HEK293 (cell line): ENCODE measurements at regions of chr9 and their contacts with region 1.

Region 1: GRCh38 chr9:134449221-134449894 is 123.1 kb downstream of the RXRA start:
- H3K4me3 ChIP-seq: no peak overlapping the region
- H3K27ac ChIP-seq: no peak overlapping the region
- H3K4me1 ChIP-seq: no peaks in the 10 kb centered on the region
- CTCF ChIP-seq: peak; percentile 87

Region 2: DNA sequence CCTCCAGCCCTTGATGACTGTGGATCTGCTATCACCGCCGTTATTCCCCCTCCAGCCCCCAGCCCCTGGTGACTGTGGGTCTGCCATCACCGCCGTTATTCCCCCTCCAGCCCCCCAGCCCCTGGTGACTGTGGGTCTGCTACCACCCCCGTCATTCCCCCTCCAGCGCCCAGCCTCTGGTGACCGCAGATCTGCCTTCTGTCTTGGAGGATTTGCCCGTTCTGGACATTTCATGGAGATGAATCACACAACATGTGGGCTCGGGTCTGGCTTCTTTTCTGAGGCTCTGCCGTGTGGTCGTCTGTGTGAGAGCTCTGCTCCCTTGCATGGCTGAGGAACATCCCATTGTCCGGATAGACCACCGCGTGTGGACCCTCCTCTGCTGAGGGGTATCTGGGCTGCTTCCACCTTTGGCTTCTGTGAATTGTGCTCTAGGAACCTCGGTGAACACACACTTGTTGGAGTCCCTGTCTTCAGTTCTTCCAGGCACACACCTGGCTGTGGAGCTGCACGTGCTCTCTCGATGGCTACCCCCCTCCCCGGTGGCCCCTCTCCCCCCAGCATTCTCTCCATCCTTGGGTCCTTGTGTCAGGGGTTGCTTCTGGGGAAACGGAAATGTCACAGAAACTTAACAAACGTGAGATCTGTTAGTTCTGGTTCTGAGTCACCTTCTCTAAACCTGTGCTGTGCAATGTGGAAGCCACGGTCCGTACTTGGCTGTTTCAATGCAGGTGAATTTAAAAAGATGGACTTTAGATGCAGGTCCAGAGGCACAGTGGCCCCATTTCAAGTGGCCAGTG is 86.9 kb after region 1 on chr9:
- CTCF ChIA-PET with region 1: interaction called, 13 read pairs
- POLR2A ChIA-PET with region 1: no interaction called
- H3K4me3 ChIP-seq: no peak overlapping the region
- H3K27ac ChIP-seq: no peak overlapping the region
- H3K4me1 ChIP-seq: no peaks in the 10 kb centered on the region
- CTCF ChIP-seq: no peak

Region 3: GRCh38 chr9:134670042-134670525 is 220.7 kb after region 1 on chr9:
- CTCF ChIA-PET with region 1: interaction called, 23 read pairs
- POLR2A ChIA-PET with region 1: no interaction called
- H3K4me3 ChIP-seq: no peak overlapping the region
- H3K27ac ChIP-seq: no peak overlapping the region
- H3K4me1 ChIP-seq: no peaks in the 10 kb centered on the region
- CTCF ChIP-seq: no peak

Region 4: DNA sequence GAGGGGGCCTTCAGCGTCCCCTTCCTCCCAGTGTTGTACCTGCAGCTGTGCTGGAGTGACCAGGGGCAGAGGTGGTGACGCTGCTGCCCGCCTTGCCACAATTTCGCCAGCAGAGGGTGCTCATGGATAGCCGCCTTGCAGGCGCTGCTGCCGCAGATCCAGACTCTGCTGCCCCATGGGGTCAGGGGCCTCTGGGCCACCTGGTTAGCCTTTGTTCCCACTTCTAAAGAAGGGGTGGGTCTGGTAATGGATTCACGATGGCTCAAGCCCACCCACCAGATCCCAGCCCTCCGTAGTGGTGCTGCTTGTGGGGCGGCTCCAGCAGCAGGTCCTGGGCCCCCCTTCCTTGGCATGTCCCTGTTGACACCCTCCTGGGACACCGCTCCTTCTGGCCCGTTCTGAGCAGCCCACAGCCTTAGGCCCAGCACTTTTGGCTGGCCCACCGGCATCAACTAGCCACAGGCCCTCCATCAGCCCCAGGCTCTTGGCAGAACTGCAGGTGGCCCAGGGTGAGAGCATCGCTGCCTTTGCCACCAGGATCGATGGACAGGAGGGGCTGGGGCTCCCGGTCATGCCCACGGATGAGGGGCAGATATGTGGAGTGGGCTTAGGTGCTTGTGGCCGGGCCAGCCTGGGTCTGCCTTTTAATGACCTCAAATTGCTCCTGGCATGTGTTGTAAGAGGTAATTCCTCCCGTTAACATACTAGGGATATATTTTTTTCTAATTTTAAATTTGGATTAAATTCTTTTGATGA is 249.4 kb after region 1 on chr9:
- CTCF ChIA-PET with region 1: interaction called, 22 read pairs
- POLR2A ChIA-PET with region 1: no interaction called
- H3K4me3 ChIP-seq: no peak overlapping the region
- H3K27ac ChIP-seq: no peak overlapping the region
- H3K4me1 ChIP-seq: no peaks in the 10 kb centered on the region
- CTCF ChIP-seq: peak; percentile 91; the same call in 1 of the 2 replicates

Region 5: GRCh38 chr9:134738869-134739659 is 289.7 kb after region 1 on chr9:
- CTCF ChIA-PET with region 1: interaction called, 62 read pairs
- POLR2A ChIA-PET with region 1: no interaction called
- H3K4me3 ChIP-seq: no peak overlapping the region
- H3K27ac ChIP-seq: no peak overlapping the region
- H3K4me1 ChIP-seq: 0 out of 2 replicates have a peak, but pooled peaks cover 2% of the 10 kb centered on the region
- CTCF ChIP-seq: peak; percentile 89